Breast epithelium (tissue), 4 donors: ENCODE measurements at regions of chr9 and their contacts with region 1.

Region 1: DNA sequence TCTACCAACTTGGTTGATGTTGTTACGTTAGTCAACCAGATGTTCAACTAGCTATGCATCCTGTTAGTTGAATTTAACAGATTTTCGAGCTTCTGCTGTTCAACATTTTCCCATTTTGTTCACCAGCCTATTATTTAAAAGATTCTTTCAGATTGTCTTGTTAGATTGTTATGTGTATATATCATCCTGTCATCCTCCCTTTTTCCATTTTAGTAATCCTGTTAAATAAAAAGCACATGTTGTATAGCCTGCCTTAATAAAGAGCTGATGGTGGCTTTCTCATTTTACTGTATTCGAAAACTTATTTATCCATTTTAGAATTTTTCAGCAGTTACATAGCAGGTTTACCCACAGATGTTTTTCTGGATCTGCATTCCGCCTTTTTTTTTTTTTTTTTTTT is 4.3 kb downstream of the TMEFF1 start:
- DNase-seq: no peak
- H3K4me3 ChIP-seq: no peak overlapping the region
- H3K27ac ChIP-seq: no peak overlapping the region
- H3K4me1 ChIP-seq: no peaks in the 10 kb centered on the region
- H3K27me3 ChIP-seq: no peaks in the 10 kb centered on the region
- CTCF ChIP-seq: no peak
- POLR2A ChIP-seq: no peak

Region 2: GRCh38 chr9:101073122-101073521 is 595.9 kb after region 1 on chr9:
- intact Hi-C with region 1: no loop called
- DNase-seq: no peak
- H3K4me3 ChIP-seq: no peak overlapping the region
- H3K27ac ChIP-seq: no peak overlapping the region
- H3K4me1 ChIP-seq: no peaks in the 10 kb centered on the region
- H3K27me3 ChIP-seq: no peaks in the 10 kb centered on the region
- CTCF ChIP-seq: no peak
- POLR2A ChIP-seq: no peak

Region 3: DNA sequence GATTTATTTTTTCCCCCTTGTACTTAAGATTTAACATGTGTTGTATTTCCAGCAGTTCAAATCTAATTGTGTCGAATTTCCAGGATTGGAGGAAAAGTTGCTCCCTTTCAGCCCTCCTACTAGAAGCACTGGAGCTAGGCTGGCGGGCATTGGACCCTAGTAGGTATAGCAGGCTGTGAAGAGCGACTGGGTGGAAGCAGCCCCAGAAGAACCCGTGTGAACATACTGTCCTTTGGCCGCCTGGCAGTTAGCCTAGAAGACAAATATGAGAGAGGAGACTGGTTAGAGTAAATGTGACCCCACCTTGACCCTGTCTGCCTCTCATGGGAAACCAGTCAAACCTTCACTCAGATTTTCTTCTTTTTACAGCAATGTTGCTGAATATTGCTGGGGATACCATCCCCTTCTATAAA is 944.4 kb after region 1 on chr9:
- intact Hi-C with region 1: loop called (anchors 5 kb)
- DNase-seq: no peak
- H3K4me3 ChIP-seq: no peak overlapping the region
- H3K27ac ChIP-seq: no peak overlapping the region
- H3K4me1 ChIP-seq: no peaks in the 10 kb centered on the region
- H3K27me3 ChIP-seq: no peaks in the 10 kb centered on the region
- CTCF ChIP-seq: no peak
- POLR2A ChIP-seq: no peak